ENCODE measurements at regions of chr6 and their contacts with region 1.

Region 1: DNA sequence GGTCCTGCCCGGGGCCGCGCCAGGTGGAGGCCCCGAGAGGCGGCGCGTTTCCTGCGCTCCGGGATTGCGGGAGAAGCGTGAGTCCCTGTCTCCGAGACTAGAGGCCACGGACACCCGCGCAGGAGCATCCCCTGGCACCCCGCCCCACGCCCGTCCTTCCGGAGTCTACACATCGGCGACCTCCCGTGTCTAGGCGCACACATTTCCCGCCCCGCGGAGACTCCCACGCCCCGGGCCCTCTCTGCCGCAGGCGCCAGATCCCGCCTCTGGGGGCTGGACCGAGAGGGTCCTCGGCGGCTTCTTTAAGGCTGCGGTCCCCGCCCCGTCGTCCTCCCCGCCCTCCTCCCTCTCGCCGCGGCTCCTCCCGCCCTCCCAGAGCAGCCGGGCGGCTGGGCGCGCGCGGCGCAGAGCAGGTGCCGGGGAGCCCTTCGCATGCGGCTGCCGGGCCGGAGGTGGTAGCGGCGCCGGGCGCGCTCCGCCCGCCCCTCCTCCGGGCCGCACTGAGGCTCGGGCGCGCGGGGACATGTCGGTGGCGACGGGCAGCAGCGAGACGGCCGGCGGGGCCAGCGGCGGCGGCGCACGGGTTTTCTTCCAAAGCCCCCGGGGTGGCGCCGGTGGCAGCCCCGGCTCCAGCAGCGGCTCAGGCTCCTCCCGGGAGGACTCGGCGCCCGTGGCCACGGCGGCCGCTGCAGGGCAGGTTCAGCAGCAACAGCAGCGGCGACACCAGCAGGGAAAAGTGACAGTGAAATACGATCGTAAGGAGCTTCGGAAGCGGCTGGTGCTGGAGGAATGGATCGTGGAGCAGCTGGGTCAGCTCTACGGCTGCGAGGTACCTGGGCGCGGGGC is at the start of gene PPP1R14C:
- DNase-seq: peak; percentile 46 to 71 (median 58)
- ATAC-seq: peak; percentile 50 to 89 (median 82)
- H3K4me3 ChIP-seq: peak within 1 kb of the TSS; percentile 12 to 74 (median 62)
- H3K27ac ChIP-seq: peak within 1 kb of the TSS; percentile 46 to 85 (median 69)
- H3K4me1 ChIP-seq: peaks cover 0 to 39% (median 6%) of the 10 kb centered on the region in 12 donors
- H3K27me3 ChIP-seq: peaks cover 4 to 75% (median 21%) of the 10 kb centered on the region in 9 donors
- CTCF ChIP-seq: no peak
- POLR2A ChIP-seq: peak in 1 of 2 donors; percentile 67
- total RNA-seq, gene PPP1R14C: 62.3 to 143 (median 83.0) TPM

Region 2: GRCh38 chr6:150093397-150093796 is 49.5 kb before region 1 on chr6:
- intact Hi-C with region 1: no loop called
- DNase-seq: no peak
- ATAC-seq: no peak
- H3K4me3 ChIP-seq: no peak overlapping the region
- H3K27ac ChIP-seq: no peak overlapping the region
- H3K4me1 ChIP-seq: no peaks in the 10 kb centered on the region
- H3K27me3 ChIP-seq: peaks cover 0 to 7% (median 0%) of the 10 kb centered on the region in 9 donors
- CTCF ChIP-seq: no peak
- POLR2A ChIP-seq: no peak

Region 3: DNA sequence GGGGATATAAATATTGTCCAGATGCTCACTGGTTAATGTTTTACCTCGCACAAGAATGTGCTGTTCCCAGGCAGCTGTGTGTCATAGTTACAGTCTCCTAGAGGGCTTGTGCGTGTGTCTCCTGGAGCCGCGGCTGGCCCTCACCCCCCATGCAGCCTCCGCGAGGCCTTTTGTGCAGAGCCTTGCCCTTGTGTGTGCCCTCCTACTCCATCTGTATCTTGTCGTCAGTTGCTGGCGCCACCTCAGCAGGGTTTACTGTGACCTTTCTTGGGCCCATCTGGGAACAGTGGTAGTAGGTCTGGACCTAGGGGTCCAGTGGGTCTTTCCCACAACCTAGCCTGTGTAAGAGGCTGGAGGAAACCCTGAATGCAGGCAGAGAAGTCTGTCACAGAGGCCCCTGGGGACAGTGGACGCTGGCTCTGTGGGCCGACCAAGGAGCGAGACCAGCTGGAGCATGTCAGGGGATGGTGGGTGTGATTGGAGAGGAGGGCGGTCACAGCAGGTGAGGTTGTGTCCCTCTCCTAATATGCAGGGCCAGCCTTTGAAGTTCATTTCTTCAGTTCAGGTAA is 35.1 kb after region 1 on chr6:
- intact Hi-C with region 1: loop called in 2 of 10 experiments (anchors 5 kb)
- DNase-seq: peak in 4 of 5 donors; percentile 44 to 87 (median 56)
- ATAC-seq: peak; percentile 64 to 74 (median 71)
- H3K4me3 ChIP-seq: no peak overlapping the region
- H3K27ac ChIP-seq: peak overlapping the region; percentile 72 to 99 (median 90)
- H3K4me1 ChIP-seq: peaks cover 0 to 59% (median 16%) of the 10 kb centered on the region in 12 donors
- H3K27me3 ChIP-seq: no peaks in the 10 kb centered on the region
- CTCF ChIP-seq: no peak
- POLR2A ChIP-seq: no peak

Region 4: DNA sequence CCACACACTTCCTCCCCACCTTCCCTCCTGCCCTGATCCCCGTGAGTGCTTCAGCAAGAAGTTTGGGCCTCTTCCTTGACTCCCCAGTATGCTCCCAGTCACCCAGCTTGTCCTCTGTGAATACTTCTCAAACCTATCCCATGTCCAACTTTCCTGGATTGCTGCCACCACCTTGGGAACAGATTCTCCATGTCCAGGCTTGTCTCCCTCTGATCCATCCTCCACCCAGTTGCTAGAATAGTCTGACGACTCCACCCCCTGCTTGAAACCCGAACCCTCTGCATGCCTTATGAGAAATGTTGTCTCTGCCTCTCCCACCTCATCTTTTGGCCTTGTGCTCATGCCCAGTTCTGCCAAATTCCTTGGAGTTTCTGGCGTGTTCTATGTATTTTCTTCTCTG is 107.9 kb after region 1 on chr6:
- intact Hi-C with region 1: loop called in 3 of 10 experiments (anchors 5 to 10 kb)
- DNase-seq: peak in 1 of 5 donors; percentile 43
- ATAC-seq: peak; percentile 32 to 59 (median 50)
- H3K4me3 ChIP-seq: no peak overlapping the region
- H3K27ac ChIP-seq: no peak overlapping the region
- H3K4me1 ChIP-seq: peaks cover 0 to 40% (median 7%) of the 10 kb centered on the region in 12 donors
- H3K27me3 ChIP-seq: peaks cover 0 to 8% (median 0%) of the 10 kb centered on the region in 9 donors
- CTCF ChIP-seq: no peak
- POLR2A ChIP-seq: no peak

Region 5: GRCh38 chr6:150320442-150320841 is 177.5 kb after region 1 on chr6:
- intact Hi-C with region 1: loop called in 4 of 10 experiments (anchors 5 kb)
- DNase-seq: peak in 4 of 5 donors; percentile 71 to 85 (median 76)
- ATAC-seq: peak; percentile 95 to 98 (median 97)
- H3K4me3 ChIP-seq: no peak overlapping the region
- H3K27ac ChIP-seq: peak overlapping the region in 4 of 12 donors; percentile 4 to 51 (median 30)
- H3K4me1 ChIP-seq: peaks cover 3 to 59% (median 16%) of the 10 kb centered on the region in 12 donors
- H3K27me3 ChIP-seq: no peaks in the 10 kb centered on the region
- CTCF ChIP-seq: no peak
- POLR2A ChIP-seq: no peak

Measured in heart left ventricle (tissue), 16 donors.